ENCODE measurements at regions of chr18 and their contacts with region 1.

Region 1: GRCh38 chr18:76709659-76710645 is 112.4 kb upstream of the ZNF236 start:
- DNase-seq: peak; percentile 78
- ATAC-seq: peak; percentile 93
- H3K4me3 ChIP-seq: no peak overlapping the region
- H3K27ac ChIP-seq: no peak overlapping the region
- H3K4me1 ChIP-seq: no peaks in the 10 kb centered on the region
- H3K27me3 ChIP-seq: no peaks in the 10 kb centered on the region
- CTCF ChIP-seq: peak; percentile 93

Region 2: GRCh38 chr18:76405681-76406356 is 304.1 kb before region 1 on chr18:
- intact Hi-C with region 1: loop called (anchors 10 kb)
- DNase-seq: no peak
- ATAC-seq: peak; percentile 66
- H3K4me3 ChIP-seq: no peak overlapping the region
- H3K27ac ChIP-seq: no peak overlapping the region
- H3K4me1 ChIP-seq: no peaks in the 10 kb centered on the region
- H3K27me3 ChIP-seq: no peaks in the 10 kb centered on the region
- CTCF ChIP-seq: peak; percentile 59

Measured in upper lobe of right lung (tissue), 1 donor.